ENCODE measurements at regions of chr7 and their contacts with region 1.

Region 1: DNA sequence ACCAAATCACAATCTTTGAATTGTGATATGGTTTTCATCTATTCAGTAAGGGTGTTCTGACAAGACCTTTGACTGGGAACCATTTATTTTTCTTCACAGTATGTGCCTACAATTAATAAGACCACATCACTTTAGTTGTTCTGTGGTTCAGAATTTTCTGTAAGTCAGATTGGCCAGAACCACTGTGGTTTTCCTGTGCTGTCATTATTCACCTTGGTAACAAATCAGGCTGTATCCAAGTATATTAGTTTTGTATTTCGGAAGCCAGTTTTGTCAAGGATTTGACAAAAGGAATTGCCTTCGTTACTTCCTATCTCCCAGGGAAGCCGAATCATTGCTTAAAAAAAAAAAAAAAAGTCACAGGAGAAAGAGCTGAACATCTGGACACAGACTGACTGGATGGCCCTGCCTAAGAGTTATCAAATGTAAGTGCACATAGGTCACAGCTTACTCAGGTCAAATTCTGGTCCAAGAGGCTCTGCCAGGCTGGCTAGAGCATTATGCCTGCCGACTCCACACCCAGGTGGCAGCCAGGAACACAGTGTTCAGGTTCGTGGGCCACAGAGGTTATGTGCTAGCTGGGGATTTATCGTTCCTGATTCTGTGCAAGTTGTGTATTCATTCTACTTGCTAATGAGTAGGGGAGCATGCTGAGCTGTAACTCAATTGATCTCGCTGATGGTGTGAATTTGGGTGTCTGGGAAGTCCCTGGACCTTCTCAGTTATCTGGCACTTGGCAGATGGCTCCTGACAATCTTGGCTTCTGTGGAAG is 175.3 kb downstream of the JAZF1 start:
- DNase-seq: peak; percentile 81 to 86
- ATAC-seq: peak; percentile 94 to 97
- H3K4me3 ChIP-seq: peak overlapping the region in 1 of 4 donors; percentile 8
- H3K27ac ChIP-seq: peak overlapping the region; percentile 82 to 88 (median 84)
- H3K4me1 ChIP-seq: peaks cover 11 to 21% of the 10 kb centered on the region in 2 donors
- H3K27me3 ChIP-seq: no peaks in the 10 kb centered on the region
- CTCF ChIP-seq: no peak
- POLR2A ChIP-seq: no peak

Region 2: DNA sequence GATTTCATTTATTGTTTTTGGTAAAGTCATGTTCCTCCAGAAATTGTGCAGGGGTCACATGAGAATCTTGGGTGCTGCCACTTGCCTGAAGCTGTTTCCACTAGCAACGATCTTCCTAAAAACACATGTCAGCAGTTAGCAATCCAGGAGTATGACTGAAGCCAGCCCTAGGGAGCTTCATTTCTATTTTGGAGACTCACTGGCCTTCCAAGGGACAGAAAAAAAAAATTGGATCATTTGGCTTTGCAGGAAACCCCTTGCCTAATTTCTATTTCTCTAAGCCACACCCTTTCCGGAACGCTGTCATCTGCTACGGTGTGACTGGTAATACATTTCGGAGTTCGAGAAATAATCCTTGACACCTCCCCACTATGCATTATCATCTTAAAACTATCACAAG is 60.6 kb before region 1 on chr7:
- in situ Hi-C with region 1: no loop called
- intact Hi-C with region 1: loop called (anchors 2 kb)
- DNase-seq: peak; percentile 39 to 64
- ATAC-seq: peak; percentile 82 to 89
- H3K4me3 ChIP-seq: peak overlapping the region; percentile 12 to 31 (median 26)
- H3K27ac ChIP-seq: peak overlapping the region; percentile 30 to 71 (median 60)
- H3K4me1 ChIP-seq: peaks cover 20 to 31% of the 10 kb centered on the region in 2 donors
- H3K27me3 ChIP-seq: no peaks in the 10 kb centered on the region
- CTCF ChIP-seq: no peak
- POLR2A ChIP-seq: no peak

Region 3: GRCh38 chr7:28078036-28078901 is 73.0 kb after region 1 on chr7:
- in situ Hi-C with region 1: no loop called
- intact Hi-C with region 1: no loop called
- DNase-seq: no peak
- ATAC-seq: peak in 1 of 2 donors; percentile 62
- H3K4me3 ChIP-seq: no peak overlapping the region
- H3K27ac ChIP-seq: no peak overlapping the region
- H3K4me1 ChIP-seq: peaks cover 17 to 22% of the 10 kb centered on the region in 2 donors
- H3K27me3 ChIP-seq: no peaks in the 10 kb centered on the region
- CTCF ChIP-seq: peak; percentile 73 to 94 (median 92)
- POLR2A ChIP-seq: no peak

Region 4: DNA sequence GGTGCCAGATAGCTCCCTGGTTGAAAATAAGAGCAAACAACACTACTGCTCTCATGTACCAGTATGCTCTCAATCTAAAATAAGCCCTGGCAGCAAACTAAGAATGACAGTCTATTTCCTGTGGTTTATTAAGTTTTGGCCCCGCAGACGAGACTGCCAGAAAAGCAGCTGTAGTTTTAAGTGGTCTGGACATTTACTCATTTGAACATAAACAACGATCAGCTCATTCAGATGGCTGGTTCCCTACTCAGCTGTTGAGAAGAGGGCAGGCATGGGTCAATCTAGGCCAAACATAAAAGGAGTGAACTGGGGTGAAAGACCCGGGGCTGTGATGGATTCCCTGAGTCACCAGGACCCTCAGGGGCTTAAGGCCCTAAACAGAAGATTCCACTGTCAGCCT is 948.4 kb after region 1 on chr7:
- in situ Hi-C with region 1: no loop called
- intact Hi-C with region 1: no loop called
- DNase-seq: no peak
- ATAC-seq: no peak
- H3K4me3 ChIP-seq: no peak overlapping the region
- H3K27ac ChIP-seq: peak overlapping the region in 3 of 4 donors; percentile 40 to 62 (median 43)
- H3K4me1 ChIP-seq: peaks cover 14 to 23% of the 10 kb centered on the region in 2 donors
- H3K27me3 ChIP-seq: peaks cover 13 to 24% (median 20%) of the 10 kb centered on the region in 3 donors
- CTCF ChIP-seq: no peak
- POLR2A ChIP-seq: no peak